ENCODE measurements at regions of chr7 and their contacts with region 1.

Region 1: GRCh38 chr7:155298834-155299534 is 1.3 kb downstream of the INSIG1 start:
- DNase-seq: peak; percentile 96
- H3K4me3 Mint-ChIP-seq: peak overlapping the region; percentile 96
- H3K27ac Mint-ChIP-seq: peak overlapping the region; percentile 95
- H3K4me1 Mint-ChIP-seq: peaks cover 59% of the 10 kb centered on the region
- H3K27me3 Mint-ChIP-seq: no peaks in the 10 kb centered on the region

Region 2: DNA sequence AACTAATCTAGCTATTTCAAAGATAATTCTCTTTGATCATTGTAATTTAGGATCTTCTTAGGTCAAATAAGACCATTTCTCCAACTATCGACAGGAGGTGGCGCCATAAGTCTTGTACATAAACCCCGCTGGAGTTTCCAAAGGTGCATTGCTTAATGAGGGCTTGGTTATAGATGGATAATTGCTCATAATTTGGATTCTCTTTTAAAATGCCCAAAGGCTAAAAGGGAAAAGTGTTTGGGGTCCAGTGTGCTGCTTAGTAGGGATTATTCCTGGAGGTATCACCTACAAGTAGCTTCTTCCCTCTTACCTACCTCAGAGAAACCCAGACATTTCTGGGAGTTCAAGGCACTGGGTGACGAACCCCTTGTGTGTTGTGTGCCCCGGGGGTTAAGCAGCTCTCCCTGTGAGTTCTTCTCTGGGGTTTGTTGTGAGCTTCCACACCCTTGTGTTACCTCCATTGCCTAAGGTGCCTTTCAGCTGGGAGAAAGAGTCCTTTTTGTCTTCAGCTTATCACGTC is 371.3 kb before region 1 on chr7:
- intact Hi-C with region 1: loop called (anchors 1 kb)
- DNase-seq: peak; percentile 59
- H3K4me3 Mint-ChIP-seq: peak overlapping the region; percentile 87
- H3K27ac Mint-ChIP-seq: peak overlapping the region; percentile 94
- H3K4me1 Mint-ChIP-seq: peaks cover 22% of the 10 kb centered on the region
- H3K27me3 Mint-ChIP-seq: peaks cover 18% of the 10 kb centered on the region

Region 3: GRCh38 chr7:155069992-155070751 is 228.8 kb before region 1 on chr7 and contains the start of gene HTR5A:
- intact Hi-C with region 1: loop called (anchors 1 kb)
- DNase-seq: peak; percentile 83
- H3K4me3 Mint-ChIP-seq: peak within 1 kb of the TSS; percentile 11
- H3K27ac Mint-ChIP-seq: no peak within 1 kb of the TSS
- H3K4me1 Mint-ChIP-seq: peaks cover 6% of the 10 kb centered on the region
- H3K27me3 Mint-ChIP-seq: peaks cover 30% of the 10 kb centered on the region
- total RNA-seq, gene HTR5A: not detected in 2 replicates

Region 4: GRCh38 chr7:155283565-155284194 is 15.3 kb before region 1 on chr7:
- intact Hi-C with region 1: loop called (anchors 1 kb)
- DNase-seq: no peak
- H3K4me3 Mint-ChIP-seq: no peak overlapping the region
- H3K27ac Mint-ChIP-seq: peak overlapping the region; percentile 51
- H3K4me1 Mint-ChIP-seq: peaks cover 86% of the 10 kb centered on the region
- H3K27me3 Mint-ChIP-seq: no peaks in the 10 kb centered on the region

Region 5: GRCh38 chr7:155644178-155644970 is 345.4 kb after region 1 on chr7 and contains the start of gene RBM33:
- intact Hi-C with region 1: loop called (anchors 5 kb)
- DNase-seq: peak; percentile 79
- H3K4me3 Mint-ChIP-seq: peak within 1 kb of the TSS; percentile 99
- H3K27ac Mint-ChIP-seq: peak within 1 kb of the TSS; percentile 100
- H3K4me1 Mint-ChIP-seq: peaks cover 26% of the 10 kb centered on the region
- H3K27me3 Mint-ChIP-seq: no peaks in the 10 kb centered on the region
- total RNA-seq, gene RBM33: 79.8 and 80.3 TPM in 2 replicates

Region 6: GRCh38 chr7:155961241-155962190 is 662.5 kb after region 1 on chr7:
- intact Hi-C with region 1: loop called (anchors 5 kb)
- DNase-seq: no peak
- H3K4me3 Mint-ChIP-seq: no peak overlapping the region
- H3K27ac Mint-ChIP-seq: no peak overlapping the region
- H3K4me1 Mint-ChIP-seq: peaks cover 21% of the 10 kb centered on the region
- H3K27me3 Mint-ChIP-seq: peaks cover 10% of the 10 kb centered on the region